Head of caudate nucleus (tissue), 42 donors: ENCODE measurements at regions of chr10 and their contacts with region 1.

Region 1: DNA sequence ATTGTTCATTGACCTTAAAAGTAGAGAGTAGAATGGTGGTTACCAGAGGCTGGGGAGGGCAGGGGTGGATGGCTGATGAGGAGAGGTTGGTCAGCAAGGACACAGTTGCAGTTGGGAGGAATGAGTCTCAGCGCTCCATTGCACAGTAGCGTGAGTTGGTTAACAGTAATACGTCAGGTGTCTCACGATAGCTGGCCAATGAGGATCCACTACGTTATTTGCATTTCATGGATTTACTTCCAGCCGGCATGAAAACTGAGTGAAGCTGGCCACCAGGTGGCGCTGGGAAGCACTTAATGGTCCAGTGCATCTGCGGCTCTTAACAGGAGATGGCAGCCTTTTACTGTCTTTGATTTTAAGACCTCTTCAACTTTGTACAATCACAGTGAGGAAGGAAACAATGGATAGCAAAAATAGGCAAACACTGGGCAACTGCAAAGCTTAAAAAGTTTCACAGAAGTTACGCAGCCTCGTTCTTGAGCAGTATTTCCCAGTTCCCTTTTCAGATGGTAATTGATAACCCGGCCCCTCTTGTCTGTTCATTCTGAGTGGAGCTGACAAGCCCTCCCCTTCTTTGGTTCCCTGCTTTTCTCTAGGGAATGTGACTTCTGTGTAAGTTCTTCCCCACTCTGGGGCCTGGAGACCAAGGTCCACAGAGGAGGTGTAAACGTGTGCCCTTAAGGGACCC is 23.7 kb downstream of the AKR1E2 start:
- DNase-seq: peak; percentile 81 to 96 (median 91)

Region 2: GRCh38 chr10:4807761-4808507 is 41.8 kb before region 1 on chr10:
- intact Hi-C with region 1: no loop called
- DNase-seq: no peak

Region 3: GRCh38 chr10:5094265-5095205 is 244.8 kb after region 1 on chr10 and contains the start of gene AKR1C3:
- intact Hi-C with region 1: loop called (anchors 10 kb)
- DNase-seq: peak in 1 of 42 donors; percentile 13

Region 4: DNA sequence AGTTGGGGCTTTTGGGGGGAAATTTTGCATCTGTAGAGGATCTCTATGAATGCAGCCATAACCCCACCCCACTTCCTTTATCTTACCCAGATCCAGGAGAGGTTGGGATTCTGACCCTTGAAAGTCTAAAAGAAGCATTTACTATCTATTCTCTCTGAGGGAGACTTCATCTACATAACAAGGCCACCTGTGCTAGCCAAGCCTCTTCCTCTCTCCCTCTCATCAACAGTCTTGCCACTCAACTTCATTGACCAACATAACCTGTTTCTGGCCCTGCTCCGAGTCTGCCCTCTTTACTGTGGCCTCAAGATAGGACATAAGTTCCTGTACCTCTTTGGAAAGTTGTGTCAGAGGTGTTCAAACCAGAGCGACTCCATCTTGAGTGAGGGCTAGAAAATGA is 535.5 kb after region 1 on chr10:
- intact Hi-C with region 1: loop called (anchors 10 kb)
- DNase-seq: no peak

Region 5: GRCh38 chr10:5614155-5614721 is 764.5 kb after region 1 on chr10:
- intact Hi-C with region 1: loop called (anchors 10 kb)
- DNase-seq: no peak